ENCODE measurements at regions of chr2 and their contacts with region 1.

Region 1: GRCh38 chr2:232292395-232293154 is 86.0 kb upstream of the ALPP start:
- DNase-seq: peak; percentile 88
- ATAC-seq: peak; percentile 91
- H3K4me3 Mint-ChIP-seq: no peak overlapping the region
- H3K27ac Mint-ChIP-seq: peak overlapping the region; percentile 78
- H3K4me1 Mint-ChIP-seq: peaks cover 11% of the 10 kb centered on the region
- H3K27me3 Mint-ChIP-seq: no peaks in the 10 kb centered on the region
- CTCF ChIP-seq: peak; percentile 81

Region 2: DNA sequence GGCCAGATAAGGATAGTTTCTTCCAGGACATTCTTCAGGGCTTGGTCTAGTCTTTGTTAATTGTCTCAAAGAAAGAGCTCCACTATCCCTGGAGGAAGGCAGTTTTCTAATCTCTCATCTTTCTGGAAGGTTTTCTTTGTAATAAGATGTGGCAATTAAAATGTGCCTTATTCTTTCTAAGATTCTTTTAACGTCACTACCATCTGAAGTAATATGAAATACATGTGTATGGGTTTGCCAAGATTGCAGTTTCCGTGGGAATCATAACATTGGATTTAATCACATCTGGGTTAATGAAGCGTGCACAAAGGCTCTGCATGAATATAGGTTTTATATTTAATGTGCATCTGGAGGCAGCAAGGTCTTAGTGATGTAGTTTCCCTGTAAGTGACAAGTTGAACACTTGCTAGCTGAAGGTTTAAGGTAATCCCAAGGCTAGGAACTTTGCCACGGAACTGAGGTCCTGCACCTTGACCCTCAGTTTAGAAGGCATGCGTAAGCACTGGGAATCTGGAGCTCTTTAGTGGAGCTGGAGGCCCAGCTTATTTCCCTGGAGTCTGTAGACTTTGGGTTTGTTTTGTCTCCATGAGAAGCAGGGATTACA is 305.3 kb before region 1 on chr2:
- CTCF ChIA-PET with region 1: no interaction called
- POLR2A ChIA-PET with region 1: no interaction called
- DNase-seq: no peak
- ATAC-seq: no peak
- H3K4me3 Mint-ChIP-seq: no peak overlapping the region
- H3K27ac Mint-ChIP-seq: peak overlapping the region; percentile 55
- H3K4me1 Mint-ChIP-seq: peaks cover 51% of the 10 kb centered on the region
- H3K27me3 Mint-ChIP-seq: no peaks in the 10 kb centered on the region
- CTCF ChIP-seq: no peak

Region 3: GRCh38 chr2:232230557-232230956 is 62.0 kb before region 1 on chr2:
- CTCF ChIA-PET with region 1: interaction called, 10 read pairs
- POLR2A ChIA-PET with region 1: no interaction called
- DNase-seq: peak; percentile 76
- ATAC-seq: peak; percentile 85
- H3K4me3 Mint-ChIP-seq: no peak overlapping the region
- H3K27ac Mint-ChIP-seq: 0 out of 2 replicates have a peak overlapping the region, but pooled peaks have one; percentile 2
- H3K4me1 Mint-ChIP-seq: peaks cover 19% of the 10 kb centered on the region
- H3K27me3 Mint-ChIP-seq: no peaks in the 10 kb centered on the region
- CTCF ChIP-seq: no peak

Region 4: GRCh38 chr2:232255033-232255432 is 37.5 kb before region 1 on chr2:
- CTCF ChIA-PET with region 1: interaction called, 11 read pairs
- POLR2A ChIA-PET with region 1: no interaction called
- DNase-seq: no peak
- ATAC-seq: no peak
- H3K4me3 Mint-ChIP-seq: no peak overlapping the region
- H3K27ac Mint-ChIP-seq: no peak overlapping the region
- H3K4me1 Mint-ChIP-seq: no peaks in the 10 kb centered on the region
- H3K27me3 Mint-ChIP-seq: no peaks in the 10 kb centered on the region
- CTCF ChIP-seq: no peak

Region 5: DNA sequence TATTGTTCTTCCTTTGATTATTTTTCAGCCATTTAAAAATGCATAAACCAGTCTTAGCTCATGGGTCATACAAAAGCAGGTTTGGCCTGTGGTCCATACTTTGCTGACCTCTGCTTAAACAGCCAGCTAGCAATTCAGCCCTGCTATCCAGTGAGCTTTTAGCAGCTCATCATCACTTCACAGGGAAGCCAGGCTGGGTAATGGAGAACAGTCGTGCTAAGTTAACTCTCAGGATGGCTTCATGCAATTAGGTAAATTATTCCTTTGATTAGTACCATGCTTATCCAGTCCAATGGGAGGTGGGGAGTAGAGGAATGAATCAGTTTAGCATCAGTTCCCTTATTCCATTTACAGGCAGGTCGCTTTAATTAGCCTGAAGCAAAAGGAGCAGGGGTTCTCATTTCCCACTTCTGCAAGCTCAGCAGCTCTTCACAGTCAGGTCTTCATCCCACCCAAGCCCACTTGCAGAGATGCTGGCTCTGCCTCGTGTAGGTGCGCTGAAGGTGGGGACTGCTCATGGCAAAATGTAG is 23.9 kb before region 1 on chr2:
- CTCF ChIA-PET with region 1: interaction called, 10 read pairs
- POLR2A ChIA-PET with region 1: no interaction called
- DNase-seq: no peak
- ATAC-seq: no peak
- H3K4me3 Mint-ChIP-seq: no peak overlapping the region
- H3K27ac Mint-ChIP-seq: no peak overlapping the region
- H3K4me1 Mint-ChIP-seq: peaks cover 20% of the 10 kb centered on the region
- H3K27me3 Mint-ChIP-seq: no peaks in the 10 kb centered on the region; the same call in 1 of the 2 replicates
- CTCF ChIP-seq: no peak

Region 6: GRCh38 chr2:232276084-232276732 is 16.4 kb before region 1 on chr2:
- CTCF ChIA-PET with region 1: interaction called, 25 read pairs
- POLR2A ChIA-PET with region 1: no interaction called
- DNase-seq: no peak
- ATAC-seq: peak; percentile 47
- H3K4me3 Mint-ChIP-seq: no peak overlapping the region
- H3K27ac Mint-ChIP-seq: peak overlapping the region; percentile 59
- H3K4me1 Mint-ChIP-seq: peaks cover 21% of the 10 kb centered on the region
- H3K27me3 Mint-ChIP-seq: no peaks in the 10 kb centered on the region
- CTCF ChIP-seq: no peak

Region 7: GRCh38 chr2:232310121-232310520 is 17.5 kb after region 1 on chr2:
- CTCF ChIA-PET with region 1: interaction called, 21 read pairs
- POLR2A ChIA-PET with region 1: no interaction called
- DNase-seq: no peak
- ATAC-seq: no peak
- H3K4me3 Mint-ChIP-seq: no peak overlapping the region
- H3K27ac Mint-ChIP-seq: no peak overlapping the region
- H3K4me1 Mint-ChIP-seq: no peaks in the 10 kb centered on the region
- H3K27me3 Mint-ChIP-seq: no peaks in the 10 kb centered on the region
- CTCF ChIP-seq: no peak

Region 8: GRCh38 chr2:232327105-232328041 is 34.8 kb after region 1 on chr2:
- CTCF ChIA-PET with region 1: interaction called, 18 read pairs
- POLR2A ChIA-PET with region 1: no interaction called
- DNase-seq: peak; percentile 96
- ATAC-seq: peak; percentile 71
- H3K4me3 Mint-ChIP-seq: no peak overlapping the region
- H3K27ac Mint-ChIP-seq: peak overlapping the region; percentile 68; the same call in 1 of the 2 replicates
- H3K4me1 Mint-ChIP-seq: peaks cover 3% of the 10 kb centered on the region; the same call in 1 of the 2 replicates
- H3K27me3 Mint-ChIP-seq: no peaks in the 10 kb centered on the region
- CTCF ChIP-seq: peak; percentile 91

Region 9: DNA sequence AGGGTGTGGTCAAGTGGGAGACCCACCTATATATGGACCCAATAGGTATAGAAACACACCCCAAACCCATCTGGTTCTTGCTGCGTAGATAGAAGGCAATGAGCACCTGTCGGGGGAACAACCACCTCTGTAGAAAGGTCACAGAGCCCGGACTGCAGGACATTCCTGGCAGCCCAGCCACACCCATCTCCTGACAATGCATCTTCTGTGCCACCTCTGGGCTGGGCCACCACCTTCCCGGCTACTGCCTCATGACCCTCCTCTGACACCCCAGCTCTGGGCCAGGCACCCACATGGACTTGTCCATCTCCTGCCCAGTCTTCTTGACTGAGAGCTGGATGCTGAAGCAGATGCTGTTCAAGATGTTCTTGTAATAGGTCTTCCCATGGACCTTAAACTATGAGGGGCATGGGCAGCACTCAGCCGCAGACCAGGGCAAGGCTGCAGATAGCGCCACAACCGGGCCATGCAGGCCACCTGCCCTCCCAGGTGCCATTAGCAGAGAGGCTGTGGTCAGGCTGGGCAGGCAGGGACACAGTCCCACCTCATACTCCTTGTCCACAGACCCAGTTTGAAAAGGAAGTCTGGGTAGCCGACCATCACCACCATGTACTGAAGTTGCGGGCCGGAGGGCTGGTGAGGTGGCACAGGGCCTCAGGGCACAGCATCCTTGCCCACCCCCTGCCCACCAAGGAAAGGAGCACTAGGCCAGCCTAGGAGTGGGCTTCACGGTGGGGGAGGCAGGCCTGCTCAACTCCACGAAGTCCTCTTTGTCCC is 123.4 kb after region 1 on chr2:
- CTCF ChIA-PET with region 1: no interaction called
- POLR2A ChIA-PET with region 1: no interaction called
- DNase-seq: no peak
- ATAC-seq: no peak
- H3K4me3 Mint-ChIP-seq: no peak overlapping the region
- H3K27ac Mint-ChIP-seq: no peak overlapping the region
- H3K4me1 Mint-ChIP-seq: peaks cover 5% of the 10 kb centered on the region
- H3K27me3 Mint-ChIP-seq: peaks cover 45% of the 10 kb centered on the region
- CTCF ChIP-seq: no peak